CD4-positive, alpha-beta T cell (primary cell): ENCODE measurements at regions of chr6 and their contacts with region 1.

Region 1: DNA sequence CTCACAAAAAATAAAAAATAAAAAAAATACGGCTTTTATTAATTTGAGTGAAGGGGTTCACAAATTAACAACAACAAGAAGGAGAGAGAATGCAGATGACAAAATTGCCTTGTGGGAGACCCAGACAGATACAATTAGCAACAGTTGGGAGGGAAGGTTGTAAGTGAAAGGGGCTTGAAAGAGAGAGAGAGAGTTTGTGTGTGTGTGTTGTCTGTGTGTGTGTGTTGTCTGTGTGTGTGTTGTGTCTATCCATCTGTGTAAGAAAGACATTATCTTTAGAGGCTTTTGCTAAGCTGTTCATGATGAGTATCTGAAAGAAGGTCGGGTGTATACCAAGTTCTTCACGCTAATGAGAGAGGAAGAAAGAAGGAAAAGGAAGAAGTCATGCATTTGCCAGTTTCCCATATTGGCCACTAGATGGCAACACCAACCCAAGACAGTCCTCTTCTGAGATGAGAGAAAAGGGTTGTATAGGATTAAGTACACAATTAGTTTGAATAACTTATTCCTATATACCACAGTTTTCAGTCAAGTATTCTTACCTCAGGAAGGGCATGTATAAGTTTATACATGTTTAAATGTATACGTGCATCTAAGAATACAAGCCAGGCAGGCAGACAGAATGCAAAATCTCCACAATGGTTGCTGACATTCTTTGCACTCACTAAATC is 63.7 kb upstream of the CD2AP start:
- DNase-seq: peak in 12 of 14 experiments; percentile 1 to 80 (median 16)
- ATAC-seq: peak; percentile 79
- H3K4me3 ChIP-seq: peak overlapping the region; percentile 52
- H3K4me3 Mint-ChIP-seq: peak overlapping the region; percentile 84
- H3K27ac ChIP-seq: no peak overlapping the region
- H3K27ac Mint-ChIP-seq: peak overlapping the region; percentile 79
- H3K4me1 ChIP-seq: peaks cover 11% of the 10 kb centered on the region
- H3K4me1 Mint-ChIP-seq: peaks cover 18% of the 10 kb centered on the region
- H3K27me3 ChIP-seq: no peaks in the 10 kb centered on the region
- H3K27me3 Mint-ChIP-seq: no peaks in the 10 kb centered on the region
- CTCF ChIP-seq: peak; percentile 83

Region 2: DNA sequence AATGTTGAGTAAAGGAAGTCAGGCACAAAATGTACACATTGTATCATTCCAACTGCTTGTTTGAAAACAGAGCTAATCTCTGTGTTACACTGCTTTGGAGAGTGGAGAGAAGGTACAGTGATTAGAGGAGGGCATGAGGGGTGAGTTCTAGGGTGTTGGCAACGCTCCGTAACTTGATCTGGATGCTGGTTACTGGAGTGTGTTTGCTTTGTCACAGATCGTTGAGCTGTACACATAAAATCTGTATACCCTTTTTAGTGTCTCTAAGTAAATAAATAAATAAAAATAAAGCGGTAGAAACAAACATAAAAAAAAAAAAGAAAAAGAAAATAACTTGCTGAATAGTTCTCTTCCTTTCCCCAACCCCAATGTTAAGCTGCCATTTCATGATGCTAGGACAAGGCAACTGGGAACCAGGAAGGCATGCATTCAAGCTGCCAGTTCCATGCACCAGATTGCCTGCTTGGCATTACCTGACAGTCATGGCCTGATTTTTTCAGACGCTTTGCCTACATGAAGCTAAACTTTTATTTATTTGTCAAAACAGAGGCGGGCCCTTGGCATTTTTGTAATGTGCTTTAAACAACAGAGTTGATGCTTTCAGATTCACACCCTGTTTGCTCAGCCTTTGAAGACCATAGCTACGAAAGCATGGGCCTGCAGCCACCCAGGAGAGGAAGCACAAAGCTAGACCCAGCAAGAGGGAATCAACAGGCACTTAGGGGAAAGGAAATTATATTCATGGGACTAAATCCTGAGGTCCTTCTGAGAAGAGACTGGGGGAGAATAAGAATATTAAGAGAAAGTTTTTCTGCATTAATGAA is 125.4 kb before region 1 on chr6:
- CTCF ChIA-PET with region 1: no interaction called
- POLR2A ChIA-PET with region 1: no interaction called
- intact Hi-C with region 1: no loop called
- DNase-seq: no peak
- ATAC-seq: no peak
- H3K4me3 ChIP-seq: no peak overlapping the region
- H3K4me3 Mint-ChIP-seq: no peak overlapping the region
- H3K27ac ChIP-seq: no peak overlapping the region
- H3K27ac Mint-ChIP-seq: no peak overlapping the region
- H3K4me1 ChIP-seq: no peaks in the 10 kb centered on the region
- H3K4me1 Mint-ChIP-seq: no peaks in the 10 kb centered on the region
- H3K27me3 ChIP-seq: no peaks in the 10 kb centered on the region
- H3K27me3 Mint-ChIP-seq: no peaks in the 10 kb centered on the region
- CTCF ChIP-seq: no peak

Region 3: DNA sequence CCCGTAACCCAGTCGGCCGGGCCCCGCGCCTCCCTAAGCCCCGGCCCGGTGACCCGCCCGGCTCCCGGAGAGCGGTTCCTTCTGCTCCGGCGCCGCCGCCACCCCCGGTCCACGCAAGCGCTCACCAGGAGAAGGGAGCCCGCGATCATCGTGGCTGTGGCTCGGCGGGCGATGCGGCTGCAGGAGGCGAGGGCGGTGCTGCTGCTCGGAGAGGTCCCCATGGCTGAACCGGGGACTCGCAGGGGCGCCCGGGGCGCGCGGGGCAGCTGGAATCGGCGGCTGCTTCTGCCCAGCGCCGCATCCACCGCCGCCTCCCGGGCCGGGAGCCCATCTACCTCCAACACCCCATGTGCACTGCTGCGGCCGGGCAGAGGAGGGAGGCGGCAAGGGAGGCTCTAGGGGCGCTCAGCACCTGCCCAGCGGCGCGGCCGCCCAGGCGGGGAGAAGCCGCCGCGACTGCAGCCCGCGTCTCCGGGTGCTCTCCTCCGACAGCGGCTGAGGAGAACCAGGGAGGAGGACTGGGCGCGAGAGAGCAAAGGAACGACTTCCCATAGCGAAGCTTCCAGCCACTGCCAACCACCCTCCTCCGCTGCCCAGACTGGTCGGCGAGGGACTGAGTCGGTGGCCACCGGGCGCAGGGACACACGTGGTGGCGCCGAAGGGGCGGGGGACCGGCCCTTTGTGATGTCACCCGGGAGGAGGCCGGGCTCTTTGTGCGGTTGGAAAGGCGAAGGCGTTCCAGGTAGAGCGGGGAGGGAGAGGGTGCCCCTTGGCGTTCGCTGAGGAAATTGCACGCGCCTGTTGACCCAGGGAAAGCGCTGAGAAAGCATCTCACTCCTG is 104.4 kb before region 1 on chr6 and contains the start of gene TNFRSF21:
- CTCF ChIA-PET with region 1: no interaction called
- POLR2A ChIA-PET with region 1: no interaction called
- intact Hi-C with region 1: no loop called
- DNase-seq: peak; percentile 39 to 83 (median 62)
- ATAC-seq: peak; percentile 96
- H3K4me3 ChIP-seq: peak within 1 kb of the TSS; percentile 54
- H3K4me3 Mint-ChIP-seq: peak within 1 kb of the TSS; percentile 82
- H3K27ac ChIP-seq: no peak within 1 kb of the TSS
- H3K27ac Mint-ChIP-seq: no peak within 1 kb of the TSS
- H3K4me1 ChIP-seq: peaks cover 14% of the 10 kb centered on the region
- H3K4me1 Mint-ChIP-seq: peaks cover 5% of the 10 kb centered on the region
- H3K27me3 ChIP-seq: peaks cover 15 to 36% of the 10 kb centered on the region in 2 experiments
- H3K27me3 Mint-ChIP-seq: peaks cover 76% of the 10 kb centered on the region
- CTCF ChIP-seq: peak; percentile 78
- total RNA-seq, gene TNFRSF21: 0.92 to 0.96 TPM

Region 4: GRCh38 chr6:47477497-47478232 is 63.8 kb after region 1 on chr6 and contains the start of gene CD2AP:
- CTCF ChIA-PET with region 1: interaction called, 3 read pairs
- POLR2A ChIA-PET with region 1: interaction called, 73 read pairs
- intact Hi-C with region 1: loop called (anchors 1 to 5 kb)
- DNase-seq: peak; percentile 81 to 96 (median 88)
- ATAC-seq: peak; percentile 85
- H3K4me3 ChIP-seq: peak within 1 kb of the TSS; percentile 92
- H3K4me3 Mint-ChIP-seq: peak within 1 kb of the TSS; percentile 100
- H3K27ac ChIP-seq: peak within 1 kb of the TSS; percentile 85 to 91
- H3K27ac Mint-ChIP-seq: peak within 1 kb of the TSS; percentile 95
- H3K4me1 ChIP-seq: peaks cover 16% of the 10 kb centered on the region
- H3K4me1 Mint-ChIP-seq: peaks cover 46% of the 10 kb centered on the region
- H3K27me3 ChIP-seq: no peaks in the 10 kb centered on the region
- H3K27me3 Mint-ChIP-seq: no peaks in the 10 kb centered on the region
- CTCF ChIP-seq: no peak
- total RNA-seq, gene CD2AP: 29.4 to 31.3 TPM

Region 5: DNA sequence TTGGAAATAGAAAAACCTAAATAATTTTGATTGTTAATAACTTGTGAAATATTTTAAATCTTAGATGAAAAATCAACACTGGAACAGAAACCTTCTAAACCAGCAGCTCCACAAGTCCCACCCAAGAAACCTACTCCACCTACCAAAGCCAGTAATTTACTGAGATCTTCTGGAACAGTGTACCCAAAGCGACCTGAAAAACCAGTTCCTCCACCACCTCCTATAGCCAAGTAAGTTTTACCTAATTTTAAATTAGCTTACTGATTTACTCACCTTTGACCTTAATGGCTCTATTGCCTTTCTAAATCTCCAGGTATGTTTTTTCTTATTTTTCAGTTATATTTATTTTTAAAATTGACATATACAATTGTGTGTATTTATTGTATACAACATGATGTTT is 181.9 kb after region 1 on chr6:
- CTCF ChIA-PET with region 1: no interaction called
- POLR2A ChIA-PET with region 1: no interaction called
- intact Hi-C with region 1: loop called in 1 of 2 experiments (anchors 10 kb)
- DNase-seq: no peak
- ATAC-seq: no peak
- H3K4me3 ChIP-seq: no peak overlapping the region
- H3K4me3 Mint-ChIP-seq: no peak overlapping the region
- H3K27ac ChIP-seq: no peak overlapping the region
- H3K27ac Mint-ChIP-seq: no peak overlapping the region
- H3K4me1 ChIP-seq: no peaks in the 10 kb centered on the region
- H3K4me1 Mint-ChIP-seq: no peaks in the 10 kb centered on the region
- H3K27me3 ChIP-seq: no peaks in the 10 kb centered on the region
- H3K27me3 Mint-ChIP-seq: no peaks in the 10 kb centered on the region
- CTCF ChIP-seq: no peak

Region 6: GRCh38 chr6:47631269-47631772 is 217.4 kb after region 1 on chr6:
- CTCF ChIA-PET with region 1: no interaction called
- POLR2A ChIA-PET with region 1: interaction called, 7 read pairs
- intact Hi-C with region 1: loop called in 1 of 2 experiments (anchors 1 kb)
- DNase-seq: peak in 3 of 14 experiments; percentile 53 to 58 (median 56)
- ATAC-seq: peak; percentile 44
- H3K4me3 ChIP-seq: no peak overlapping the region
- H3K4me3 Mint-ChIP-seq: no peak overlapping the region
- H3K27ac ChIP-seq: no peak overlapping the region
- H3K27ac Mint-ChIP-seq: peak overlapping the region; percentile 6
- H3K4me1 ChIP-seq: peaks cover 9% of the 10 kb centered on the region
- H3K4me1 Mint-ChIP-seq: peaks cover 24% of the 10 kb centered on the region
- H3K27me3 ChIP-seq: no peaks in the 10 kb centered on the region
- H3K27me3 Mint-ChIP-seq: no peaks in the 10 kb centered on the region
- CTCF ChIP-seq: peak; percentile 70

Region 7: DNA sequence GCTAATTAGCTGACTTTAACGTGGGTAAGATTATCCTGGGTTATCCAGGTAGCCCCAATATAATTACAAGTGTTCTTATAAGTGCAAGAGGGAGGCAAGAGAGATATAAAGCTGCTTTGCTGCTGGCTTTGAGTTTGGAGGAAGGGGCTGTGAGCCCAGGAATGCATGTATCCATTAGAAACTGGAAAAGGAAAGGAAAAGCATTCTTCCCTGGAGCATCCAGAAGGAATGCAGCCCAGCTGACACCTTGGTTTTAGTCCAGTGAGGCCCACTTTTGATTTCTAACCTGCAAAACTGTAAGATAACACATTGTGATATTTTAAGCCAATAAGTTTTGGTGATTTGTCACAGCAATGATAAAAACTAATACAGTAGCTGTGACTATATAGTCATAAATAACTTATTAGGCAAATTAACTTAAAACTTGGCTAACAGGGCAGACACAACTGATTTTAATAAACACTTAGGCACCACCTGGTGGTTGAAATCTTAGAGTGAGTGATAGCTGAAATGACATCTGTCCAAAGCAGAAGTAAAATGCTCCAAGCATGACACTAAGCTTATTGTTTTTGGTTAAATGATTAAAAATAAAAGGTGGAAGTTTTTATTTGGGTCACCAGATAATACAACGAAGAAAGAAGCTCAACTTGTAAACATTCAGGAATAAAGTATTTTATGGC is 320.1 kb after region 1 on chr6:
- CTCF ChIA-PET with region 1: no interaction called
- POLR2A ChIA-PET with region 1: no interaction called
- intact Hi-C with region 1: loop called (anchors 1 to 5 kb)
- DNase-seq: peak in 3 of 14 experiments; percentile 20 to 26 (median 24)
- ATAC-seq: no peak
- H3K4me3 ChIP-seq: no peak overlapping the region
- H3K4me3 Mint-ChIP-seq: no peak overlapping the region
- H3K27ac ChIP-seq: no peak overlapping the region
- H3K27ac Mint-ChIP-seq: no peak overlapping the region
- H3K4me1 ChIP-seq: no peaks in the 10 kb centered on the region
- H3K4me1 Mint-ChIP-seq: no peaks in the 10 kb centered on the region
- H3K27me3 ChIP-seq: no peaks in the 10 kb centered on the region
- H3K27me3 Mint-ChIP-seq: no peaks in the 10 kb centered on the region
- CTCF ChIP-seq: no peak

Region 8: DNA sequence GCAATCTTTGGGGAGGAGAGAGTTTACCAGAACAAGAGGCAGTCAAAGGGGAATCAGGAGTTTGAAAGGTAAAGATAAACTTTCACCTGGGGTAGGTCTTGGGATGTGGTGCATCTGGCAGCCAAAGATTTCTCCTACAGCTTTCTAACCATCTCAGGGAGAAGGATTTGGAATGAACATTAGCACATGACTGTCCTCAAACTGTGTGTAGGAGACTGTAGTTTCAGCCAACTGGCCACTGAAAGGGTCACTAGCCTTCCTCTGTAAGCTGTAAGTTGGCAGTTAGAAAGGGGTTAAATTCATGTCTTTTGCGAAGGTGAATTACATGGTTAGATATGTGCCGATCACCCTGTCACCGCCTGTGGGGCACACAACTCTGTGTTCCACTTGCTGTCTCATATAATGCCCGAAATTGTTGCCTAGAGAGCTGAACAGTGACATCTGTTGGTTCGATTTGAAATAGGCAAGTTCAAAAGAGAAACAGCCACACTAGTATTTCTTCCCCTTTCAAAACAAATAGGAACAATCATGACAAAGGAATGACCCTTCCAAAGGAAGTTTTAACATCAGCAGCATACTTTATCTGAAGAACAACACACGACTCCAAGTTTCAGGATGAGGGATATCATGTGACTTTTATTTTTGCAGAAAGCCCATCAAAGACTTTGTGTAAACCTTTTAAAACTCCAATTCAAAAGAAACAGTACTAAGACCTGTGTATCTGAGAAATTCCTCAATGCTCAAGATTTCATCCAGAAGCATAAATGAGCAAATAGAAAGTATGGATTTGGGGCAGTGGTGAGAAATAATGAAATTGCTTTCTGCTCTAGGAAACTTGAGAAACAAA is 366.8 kb after region 1 on chr6:
- CTCF ChIA-PET with region 1: interaction called, 6 read pairs
- POLR2A ChIA-PET with region 1: interaction called, 8 read pairs
- intact Hi-C with region 1: loop called (anchors 1 kb)
- DNase-seq: peak in 8 of 14 experiments; percentile 7 to 63 (median 30)
- ATAC-seq: peak; percentile 77
- H3K4me3 ChIP-seq: no peak overlapping the region
- H3K4me3 Mint-ChIP-seq: no peak overlapping the region
- H3K27ac ChIP-seq: no peak overlapping the region
- H3K27ac Mint-ChIP-seq: no peak overlapping the region
- H3K4me1 ChIP-seq: peaks cover 3% of the 10 kb centered on the region
- H3K4me1 Mint-ChIP-seq: peaks cover 5% of the 10 kb centered on the region
- H3K27me3 ChIP-seq: no peaks in the 10 kb centered on the region
- H3K27me3 Mint-ChIP-seq: peaks cover 5% of the 10 kb centered on the region
- CTCF ChIP-seq: peak; percentile 42

Region 9: DNA sequence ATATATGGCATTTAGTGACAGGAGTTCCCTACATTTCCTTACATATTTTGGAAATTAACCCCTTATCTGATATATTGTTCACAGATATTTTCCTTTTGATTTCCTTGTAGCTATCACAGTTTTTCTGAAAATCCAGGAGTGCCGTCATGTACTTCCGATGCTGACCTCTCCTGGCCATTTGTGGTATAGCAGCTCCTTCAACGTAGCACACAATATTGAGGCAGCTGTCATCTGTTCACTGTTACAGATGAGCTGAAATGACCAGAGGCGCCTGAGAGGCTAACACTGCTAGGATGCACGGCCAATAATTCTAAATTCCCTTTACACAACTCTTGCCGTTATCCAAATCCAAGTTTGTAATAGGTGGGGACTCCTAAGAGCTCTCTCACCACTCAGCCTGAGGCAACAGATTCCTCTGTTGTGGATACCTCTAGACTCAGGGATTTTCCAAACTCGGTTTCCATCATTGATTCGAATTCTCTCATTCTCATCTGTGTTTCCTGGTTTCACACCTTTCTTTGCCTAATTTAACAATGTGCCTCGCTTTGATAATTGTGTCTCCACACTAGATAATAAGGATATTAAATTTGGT is 1996.2 kb after region 1 on chr6:
- CTCF ChIA-PET with region 1: no interaction called
- POLR2A ChIA-PET with region 1: no interaction called
- intact Hi-C with region 1: loop called in 1 of 2 experiments (anchors 1 kb)
- DNase-seq: peak; percentile 7 to 67 (median 42)
- ATAC-seq: peak; percentile 71
- H3K4me3 ChIP-seq: no peak overlapping the region
- H3K4me3 Mint-ChIP-seq: no peak overlapping the region
- H3K27ac ChIP-seq: no peak overlapping the region
- H3K27ac Mint-ChIP-seq: no peak overlapping the region
- H3K4me1 ChIP-seq: no peaks in the 10 kb centered on the region
- H3K4me1 Mint-ChIP-seq: no peaks in the 10 kb centered on the region
- H3K27me3 ChIP-seq: no peaks in the 10 kb centered on the region
- H3K27me3 Mint-ChIP-seq: peaks cover 13% of the 10 kb centered on the region
- CTCF ChIP-seq: peak; percentile 95